Activated CD4-positive, alpha-beta memory T cell treated with anti-CD3 and anti-CD28 coated beads for 36 hours (primary cell): ENCODE measurements at regions of chr7 and their contacts with region 1.

Region 1: GRCh38 chr7:82729172-82730030 is 285.8 kb upstream of the CACNA2D1 start:
- DNase-seq: no peak
- H3K4me3 Mint-ChIP-seq: no peak overlapping the region
- H3K27ac Mint-ChIP-seq: no peak overlapping the region
- H3K4me1 Mint-ChIP-seq: no peaks in the 10 kb centered on the region
- H3K27me3 Mint-ChIP-seq: no peaks in the 10 kb centered on the region

Region 2: GRCh38 chr7:81482600-81483186 is 1246.7 kb before region 1 on chr7:
- CTCF ChIA-PET with region 1: no interaction called
- POLR2A ChIA-PET with region 1: no interaction called
- intact Hi-C with region 1: loop called (anchors 2 kb)
- DNase-seq: no peak
- H3K4me3 Mint-ChIP-seq: no peak overlapping the region
- H3K27ac Mint-ChIP-seq: no peak overlapping the region
- H3K4me1 Mint-ChIP-seq: no peaks in the 10 kb centered on the region
- H3K27me3 Mint-ChIP-seq: no peaks in the 10 kb centered on the region

Region 3: GRCh38 chr7:82572195-82572880 is 157.1 kb before region 1 on chr7:
- CTCF ChIA-PET with region 1: interaction called, 3 read pairs
- POLR2A ChIA-PET with region 1: no interaction called
- intact Hi-C with region 1: loop called (anchors 5 kb)
- DNase-seq: peak; percentile 72
- H3K4me3 Mint-ChIP-seq: no peak overlapping the region
- H3K27ac Mint-ChIP-seq: no peak overlapping the region
- H3K4me1 Mint-ChIP-seq: no peaks in the 10 kb centered on the region
- H3K27me3 Mint-ChIP-seq: no peaks in the 10 kb centered on the region

Region 4: DNA sequence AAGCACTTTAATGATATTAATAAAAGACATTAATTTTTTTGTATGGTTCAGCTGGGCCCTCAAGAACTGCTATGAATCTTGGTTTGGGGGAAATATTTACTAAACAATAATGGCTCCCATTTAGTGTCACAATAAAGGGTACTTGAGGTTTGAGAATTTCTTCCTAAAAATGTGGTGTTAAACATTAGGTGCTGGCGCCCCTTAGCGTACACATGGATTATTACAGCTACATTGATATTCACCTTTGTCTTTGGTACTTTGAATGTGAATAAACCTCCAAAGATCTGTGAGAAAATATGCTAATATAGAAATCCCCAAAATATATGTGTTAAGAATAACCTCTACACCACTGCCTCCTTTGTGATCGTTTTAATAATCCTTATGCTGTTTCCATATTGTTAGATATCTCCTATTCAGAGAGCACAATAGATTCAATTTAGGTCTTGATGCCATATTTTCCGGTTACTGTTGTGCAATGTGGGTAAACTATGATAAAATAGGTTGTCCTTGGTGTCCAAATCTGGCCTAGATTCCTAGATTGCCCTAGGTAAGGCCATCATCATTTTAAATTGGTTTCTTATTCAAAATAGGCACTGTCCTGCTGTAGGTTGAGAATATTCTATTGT is 124.0 kb before region 1 on chr7:
- CTCF ChIA-PET with region 1: no interaction called
- POLR2A ChIA-PET with region 1: no interaction called
- intact Hi-C with region 1: loop called (anchors 10 kb)
- DNase-seq: no peak
- H3K4me3 Mint-ChIP-seq: no peak overlapping the region
- H3K27ac Mint-ChIP-seq: no peak overlapping the region
- H3K4me1 Mint-ChIP-seq: no peaks in the 10 kb centered on the region
- H3K27me3 Mint-ChIP-seq: no peaks in the 10 kb centered on the region